Mammary epithelial cell (primary cell): ENCODE measurements at regions of chr2 and their contacts with region 1.

Region 1: DNA sequence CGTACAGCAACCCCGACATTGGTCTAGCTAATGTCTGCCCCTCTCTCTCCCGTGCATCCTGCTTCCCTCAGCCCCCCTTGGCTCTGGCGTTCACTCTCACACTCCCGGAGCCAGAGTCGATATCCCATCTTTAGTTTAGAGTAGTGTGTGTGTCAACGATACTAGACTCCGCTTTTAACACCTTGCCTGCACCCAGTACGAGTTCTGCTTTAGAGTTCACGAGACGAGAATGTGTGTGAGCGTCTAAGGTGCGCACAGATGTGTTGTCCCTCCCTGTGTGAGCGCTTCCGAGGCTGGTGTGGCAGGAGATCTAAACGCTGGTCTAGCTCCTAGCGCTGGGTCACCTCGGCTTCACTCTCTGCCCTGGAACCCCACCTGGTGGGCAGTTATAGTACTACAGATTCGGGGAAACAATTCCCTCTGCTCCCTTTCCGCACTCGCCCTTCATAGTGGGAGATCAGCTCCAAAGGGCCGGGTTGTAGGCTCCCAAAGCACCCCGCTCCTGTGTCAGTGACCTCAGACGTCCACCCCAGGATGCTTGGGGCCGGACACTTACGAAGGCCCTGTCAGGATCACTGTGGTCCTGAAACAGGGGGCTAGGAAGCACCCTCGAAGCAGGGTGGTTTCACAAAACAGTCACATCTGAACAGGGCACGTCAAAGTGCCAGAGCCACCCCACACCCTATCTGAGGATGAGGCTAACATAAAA is 2.6 kb upstream of the CYP26B1 start:
- DNase-seq: peak; percentile 65
- H3K4me3 ChIP-seq: peak overlapping the region in 2 of 3 experiments; percentile 23 to 28
- H3K27ac ChIP-seq: no peak overlapping the region
- H3K4me1 ChIP-seq: peaks cover 32% of the 10 kb centered on the region
- H3K27me3 ChIP-seq: peaks cover 22% of the 10 kb centered on the region
- CTCF ChIP-seq: peak; percentile 66 to 84

Region 2: GRCh38 chr2:71530641-71531332 is 619.5 kb before region 1 on chr2:
- CTCF ChIA-PET with region 1: no interaction called
- dilution Hi-C with region 1: no loop called
- in situ Hi-C with region 1: no loop called
- intact Hi-C with region 1: loop called (anchors 1 kb)
- DNase-seq: peak; percentile 24
- H3K4me3 ChIP-seq: no peak overlapping the region
- H3K27ac ChIP-seq: no peak overlapping the region
- H3K4me1 ChIP-seq: peaks cover 14% of the 10 kb centered on the region
- H3K27me3 ChIP-seq: no peaks in the 10 kb centered on the region
- CTCF ChIP-seq: peak; percentile 74 to 76

Region 3: GRCh38 chr2:71798266-71799012 is 351.9 kb before region 1 on chr2:
- CTCF ChIA-PET with region 1: interaction called, 5 read pairs
- dilution Hi-C with region 1: no loop called
- in situ Hi-C with region 1: loop called in 1 of 2 experiments (anchors 10 kb)
- intact Hi-C with region 1: loop called (anchors 1 kb)
- DNase-seq: peak; percentile 22
- H3K4me3 ChIP-seq: no peak overlapping the region
- H3K27ac ChIP-seq: no peak overlapping the region
- H3K4me1 ChIP-seq: no peaks in the 10 kb centered on the region
- H3K27me3 ChIP-seq: no peaks in the 10 kb centered on the region
- CTCF ChIP-seq: peak; percentile 73 to 94

Region 4: GRCh38 chr2:71882949-71883472 is 267.3 kb before region 1 on chr2:
- CTCF ChIA-PET with region 1: no interaction called
- dilution Hi-C with region 1: no loop called
- in situ Hi-C with region 1: no loop called
- intact Hi-C with region 1: no loop called
- DNase-seq: peak; percentile 80
- H3K4me3 ChIP-seq: no peak overlapping the region
- H3K27ac ChIP-seq: no peak overlapping the region
- H3K4me1 ChIP-seq: peaks cover 35% of the 10 kb centered on the region
- H3K27me3 ChIP-seq: no peaks in the 10 kb centered on the region
- CTCF ChIP-seq: no peak

Region 5: DNA sequence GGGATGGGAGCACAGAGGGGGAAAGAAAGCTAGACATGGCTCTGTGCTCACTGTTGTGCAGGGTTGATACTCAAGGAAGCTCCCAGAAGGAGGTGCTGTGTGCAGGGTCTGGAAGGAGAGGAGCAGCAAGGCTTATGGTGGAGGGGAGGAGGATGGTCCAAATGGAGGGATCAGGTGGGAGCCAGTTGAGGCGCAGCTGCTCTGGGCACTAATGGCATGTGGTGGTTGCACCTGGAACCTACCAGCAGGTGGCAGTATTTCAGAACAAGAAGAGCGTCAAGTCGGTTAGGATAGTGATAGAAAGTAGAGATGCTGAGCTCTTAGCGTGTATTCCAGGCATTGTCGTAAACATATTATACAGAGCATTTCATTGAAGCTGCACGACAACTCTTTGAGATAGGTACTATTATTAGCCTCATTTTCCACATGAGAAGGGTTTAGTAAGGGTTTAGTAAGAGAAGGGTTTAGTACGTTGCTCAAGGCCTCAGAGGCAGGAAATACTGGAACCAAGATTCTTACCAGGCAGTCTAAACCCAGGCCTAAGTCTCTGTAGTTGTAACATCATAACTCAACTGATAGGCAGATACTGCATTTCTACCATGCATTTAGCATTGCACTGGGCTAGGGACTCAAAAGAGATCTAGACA is 226.3 kb before region 1 on chr2:
- CTCF ChIA-PET with region 1: interaction called, 13 read pairs
- dilution Hi-C with region 1: loop called (anchors 25 kb)
- in situ Hi-C with region 1: loop called (anchors 5 kb)
- intact Hi-C with region 1: loop called (anchors 1 kb)
- DNase-seq: peak; percentile 56
- H3K4me3 ChIP-seq: no peak overlapping the region
- H3K27ac ChIP-seq: no peak overlapping the region
- H3K4me1 ChIP-seq: no peaks in the 10 kb centered on the region
- H3K27me3 ChIP-seq: no peaks in the 10 kb centered on the region
- CTCF ChIP-seq: peak; percentile 81 to 89

Region 6: DNA sequence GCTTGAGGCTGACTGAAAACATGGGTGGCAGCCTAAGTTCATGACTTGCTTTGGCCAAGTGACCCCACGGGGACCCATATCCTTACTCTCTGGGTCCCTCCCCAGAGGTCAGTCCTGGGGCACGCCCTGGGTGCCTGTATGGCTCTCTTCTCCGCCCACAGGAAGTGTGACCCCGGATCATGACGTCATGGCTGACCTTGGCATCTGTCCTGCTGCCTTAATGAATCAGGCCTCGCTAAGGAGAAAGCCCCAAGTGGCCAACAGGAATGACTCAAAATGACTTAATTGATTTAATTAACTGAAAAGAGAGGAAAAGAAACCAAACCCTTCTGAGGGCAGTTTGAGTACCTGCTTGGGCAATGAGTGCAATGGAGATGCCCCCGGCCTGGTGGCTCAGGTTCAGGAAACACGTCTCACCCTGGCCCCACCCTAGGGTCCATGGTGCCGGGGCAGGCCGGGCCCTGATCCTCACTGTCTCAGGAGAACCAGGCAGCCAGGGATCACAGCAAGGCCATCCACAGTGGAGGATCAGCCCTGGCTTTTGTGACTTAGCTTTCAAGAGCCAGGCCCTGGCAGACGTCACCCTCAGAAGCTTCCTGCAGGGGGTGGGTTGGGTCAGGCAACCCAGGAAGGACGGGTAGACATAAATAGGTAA is 114.7 kb before region 1 on chr2:
- CTCF ChIA-PET with region 1: no interaction called
- dilution Hi-C with region 1: no loop called
- in situ Hi-C with region 1: no loop called
- intact Hi-C with region 1: loop called (anchors 5 kb)
- DNase-seq: peak; percentile 61
- H3K4me3 ChIP-seq: no peak overlapping the region
- H3K27ac ChIP-seq: no peak overlapping the region
- H3K4me1 ChIP-seq: peaks cover 44% of the 10 kb centered on the region
- H3K27me3 ChIP-seq: no peaks in the 10 kb centered on the region
- CTCF ChIP-seq: no peak

Region 7: GRCh38 chr2:72579591-72580180 is 429.4 kb after region 1 on chr2:
- CTCF ChIA-PET with region 1: interaction called, 5 read pairs
- dilution Hi-C with region 1: no loop called
- in situ Hi-C with region 1: loop called (anchors 25 kb)
- intact Hi-C with region 1: loop called (anchors 1 kb)
- DNase-seq: peak; percentile 28
- H3K4me3 ChIP-seq: no peak overlapping the region
- H3K27ac ChIP-seq: no peak overlapping the region
- H3K4me1 ChIP-seq: no peaks in the 10 kb centered on the region
- H3K27me3 ChIP-seq: no peaks in the 10 kb centered on the region
- CTCF ChIP-seq: peak; percentile 52 to 60